ENCODE measurements at regions of chr11 and their contacts with region 1.

Region 1: DNA sequence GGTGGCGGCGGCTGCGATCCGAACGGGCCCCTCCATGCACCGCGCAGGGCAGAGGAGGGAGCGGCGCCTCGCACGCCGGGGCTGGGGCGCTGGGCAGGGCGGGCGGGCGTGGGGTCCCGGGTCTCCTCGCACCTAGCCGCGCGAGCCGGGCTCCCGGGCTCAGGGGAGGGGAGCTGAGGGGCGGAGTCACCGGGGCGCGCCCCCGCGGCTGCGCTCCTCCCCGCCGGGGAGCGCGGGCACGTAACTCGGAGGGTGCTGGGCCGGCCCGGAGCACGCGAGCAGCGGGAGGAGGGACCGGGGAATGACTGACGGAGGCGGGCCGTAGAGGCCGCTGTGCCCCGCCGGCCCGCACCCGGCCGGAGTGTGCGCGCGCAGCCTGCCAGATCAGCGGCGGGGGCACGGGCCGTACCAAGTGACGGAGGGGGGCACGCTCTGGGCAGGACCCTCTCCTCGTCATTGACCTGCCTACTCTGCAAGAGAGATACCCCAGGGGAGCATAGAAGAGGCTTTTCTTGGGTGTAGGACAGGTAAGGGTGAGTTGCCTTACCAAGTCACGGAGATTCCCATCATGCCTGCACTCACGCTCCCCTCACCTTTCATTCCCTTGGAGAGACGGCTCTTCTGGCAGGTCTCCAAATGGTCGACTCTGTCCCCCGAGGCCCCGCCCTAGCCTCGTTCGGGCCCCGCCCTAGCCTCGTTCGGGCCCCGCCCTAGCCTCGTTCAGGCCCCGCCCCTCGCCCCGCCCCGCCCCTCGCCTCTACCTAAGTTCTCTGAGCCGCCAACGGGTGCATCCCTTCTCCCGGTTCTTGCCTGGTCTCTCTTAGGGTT is at the start of gene CDON:
- DNase-seq: peak; percentile 84 to 87
- ATAC-seq: peak; percentile 95 to 96
- H3K4me3 ChIP-seq: peak within 1 kb of the TSS; percentile 65 to 84 (median 74)
- H3K27ac ChIP-seq: peak within 1 kb of the TSS; percentile 64 to 83 (median 68)
- H3K4me1 ChIP-seq: peaks cover 9 to 11% of the 10 kb centered on the region in 2 donors
- H3K27me3 ChIP-seq: peaks cover 0 to 7% (median under 1%) of the 10 kb centered on the region in 3 donors
- CTCF ChIP-seq: peak in 1 of 5 experiments; percentile 25
- POLR2A ChIP-seq: peak in 1 of 2 donors; percentile 27
- total RNA-seq, gene CDON: 1.0 to 2.0 (median 1.8) TPM

Region 2: GRCh38 chr11:125679397-125679796 is 383.5 kb before region 1 on chr11:
- in situ Hi-C with region 1: no loop called
- intact Hi-C with region 1: no loop called
- DNase-seq: no peak
- ATAC-seq: no peak
- H3K4me3 ChIP-seq: no peak overlapping the region
- H3K27ac ChIP-seq: no peak overlapping the region
- H3K4me1 ChIP-seq: no peaks in the 10 kb centered on the region
- H3K27me3 ChIP-seq: no peaks in the 10 kb centered on the region
- CTCF ChIP-seq: no peak
- POLR2A ChIP-seq: no peak

Region 3: GRCh38 chr11:126224647-126225294 is 161.9 kb after region 1 on chr11:
- in situ Hi-C with region 1: no loop called
- intact Hi-C with region 1: no loop called
- DNase-seq: no peak
- ATAC-seq: no peak
- H3K4me3 ChIP-seq: no peak overlapping the region
- H3K27ac ChIP-seq: no peak overlapping the region
- H3K4me1 ChIP-seq: peaks cover 0 to 3% of the 10 kb centered on the region in 2 donors
- H3K27me3 ChIP-seq: no peaks in the 10 kb centered on the region
- CTCF ChIP-seq: no peak
- POLR2A ChIP-seq: no peak

Region 4: DNA sequence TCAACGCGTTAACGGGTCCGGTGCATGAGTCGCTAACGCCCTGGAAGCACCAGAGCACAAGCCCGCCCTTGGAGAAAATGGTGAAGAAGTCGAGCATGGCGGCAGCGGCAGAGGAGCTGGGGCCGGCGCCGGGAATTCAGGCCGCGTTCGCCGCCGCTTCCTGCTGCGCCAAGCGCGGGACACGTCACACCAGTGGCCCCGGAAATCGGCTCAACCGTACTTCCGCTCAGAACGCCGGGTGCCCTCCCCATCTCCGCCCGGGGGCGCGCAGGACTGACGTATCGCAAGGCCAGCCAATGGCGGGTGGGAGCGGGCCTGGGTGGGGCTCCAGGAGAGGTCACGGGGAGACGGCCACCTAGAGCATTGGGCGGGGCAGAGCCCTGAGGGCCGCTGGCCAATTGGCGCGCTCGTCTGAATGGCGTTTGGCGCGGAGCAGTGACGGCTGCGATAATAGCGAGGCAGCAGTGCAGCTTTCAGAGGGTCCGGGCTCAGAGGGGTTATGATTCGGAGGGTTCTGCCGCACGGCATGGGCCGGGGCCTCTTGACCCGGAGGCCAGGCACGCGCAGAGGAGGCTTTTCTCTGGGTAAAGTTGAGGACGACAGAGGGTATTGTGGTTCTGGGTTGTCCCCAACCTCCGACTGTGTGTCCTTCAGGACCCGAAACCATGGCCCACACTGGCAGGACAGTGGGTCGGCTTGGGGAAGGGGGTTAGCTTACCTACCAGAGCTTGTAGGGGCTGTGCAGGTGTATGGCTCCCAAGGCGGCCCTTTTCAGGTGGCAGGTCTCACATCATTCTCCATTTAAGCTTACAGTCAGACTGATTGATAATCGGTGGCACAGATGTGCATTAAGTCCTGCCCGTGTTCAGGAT is 206.1 kb after region 1 on chr11 and contains the starts of genes FOXRED1 and SRPRA:
- in situ Hi-C with region 1: no loop called
- intact Hi-C with region 1: loop called (anchors 2 kb)
- DNase-seq: peak; percentile 99 to 100
- ATAC-seq: peak; percentile 91 to 94
- H3K4me3 ChIP-seq: peak within 1 kb of the TSS; percentile 82 to 99 (median 88)
- H3K27ac ChIP-seq: peak within 1 kb of the TSS; percentile 87 to 96 (median 91)
- H3K4me1 ChIP-seq: peaks cover 22% of the 10 kb centered on the region in 2 donors
- H3K27me3 ChIP-seq: no peaks in the 10 kb centered on the region
- CTCF ChIP-seq: peak in 1 of 5 experiments; percentile 8
- POLR2A ChIP-seq: peak; percentile 76 to 86
- total RNA-seq, gene FOXRED1: 12.5 to 20.8 (median 16.2) TPM
- total RNA-seq, gene SRPRA: 72.3 to 101 (median 79.4) TPM

Measured in gastrocnemius medialis (tissue), 4 donors.